ENCODE measurements at regions of chr9 and their contacts with region 1.

Region 1: DNA sequence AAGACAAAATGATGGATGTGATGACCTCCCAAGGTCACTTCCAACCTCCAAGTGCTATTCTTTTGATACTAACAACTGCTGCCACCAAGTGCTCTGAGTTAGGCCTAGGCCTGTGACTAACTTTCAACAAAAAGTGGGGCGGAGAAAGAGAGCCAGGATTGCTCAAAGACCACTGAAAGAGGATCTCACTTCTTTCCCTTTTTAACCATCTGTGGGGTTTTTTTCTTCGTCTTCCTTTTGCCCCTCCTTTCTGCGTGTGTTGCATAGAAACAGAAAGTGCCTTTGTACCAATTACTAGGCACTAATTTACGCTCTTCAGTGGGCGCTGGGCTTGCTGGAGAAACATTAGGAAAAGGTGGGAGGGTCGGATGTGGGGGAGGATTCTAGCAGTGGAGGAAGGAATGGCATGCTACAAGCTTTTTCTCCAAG is 8.0 kb downstream of the KLF9 start:
- DNase-seq: no peak

Region 2: DNA sequence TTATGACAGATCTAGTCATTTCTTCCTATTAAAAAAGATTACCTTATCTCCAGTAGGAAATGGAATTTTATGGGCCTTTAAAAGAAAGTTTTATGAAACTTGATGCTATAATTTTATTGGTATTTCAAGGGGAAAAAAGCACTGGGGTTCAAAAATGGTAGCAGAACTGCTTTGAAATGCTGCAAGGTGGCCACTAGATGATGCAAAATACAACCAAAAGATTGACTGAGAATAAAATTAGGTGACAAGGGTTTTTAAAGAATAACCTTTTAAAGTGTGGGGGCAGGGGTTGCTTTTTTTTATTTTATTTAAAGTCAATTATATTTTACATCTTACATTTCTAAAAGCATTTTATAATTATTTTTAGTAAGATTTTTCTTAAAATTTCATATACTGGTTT is 53.6 kb before region 1 on chr9:
- intact Hi-C with region 1: loop called (anchors 5 kb)
- DNase-seq: no peak

Region 3: DNA sequence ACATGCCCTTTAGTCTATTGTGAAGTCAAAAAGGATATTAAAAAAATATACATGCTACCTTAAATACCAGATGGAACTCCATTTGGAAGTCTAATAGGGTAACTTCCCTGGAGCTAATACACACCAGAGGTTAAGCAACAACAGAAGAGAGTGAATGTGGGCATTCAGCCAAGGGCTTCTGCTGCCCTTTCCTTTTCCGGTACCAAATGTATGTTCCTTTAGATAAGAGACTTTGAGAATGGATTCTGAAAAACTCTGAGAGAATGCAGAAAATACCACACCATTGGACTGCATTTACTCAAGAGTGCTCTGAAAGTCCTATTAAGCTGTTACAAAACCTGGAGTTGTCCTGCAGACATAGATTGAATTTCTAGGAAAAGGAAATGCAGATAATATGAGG is 738.7 kb after region 1 on chr9:
- intact Hi-C with region 1: no loop called
- DNase-seq: no peak

Measured in posterior cingulate gyrus (tissue), 11 donors.